ENCODE measurements at regions of chr9 and their contacts with region 1.

Region 1: DNA sequence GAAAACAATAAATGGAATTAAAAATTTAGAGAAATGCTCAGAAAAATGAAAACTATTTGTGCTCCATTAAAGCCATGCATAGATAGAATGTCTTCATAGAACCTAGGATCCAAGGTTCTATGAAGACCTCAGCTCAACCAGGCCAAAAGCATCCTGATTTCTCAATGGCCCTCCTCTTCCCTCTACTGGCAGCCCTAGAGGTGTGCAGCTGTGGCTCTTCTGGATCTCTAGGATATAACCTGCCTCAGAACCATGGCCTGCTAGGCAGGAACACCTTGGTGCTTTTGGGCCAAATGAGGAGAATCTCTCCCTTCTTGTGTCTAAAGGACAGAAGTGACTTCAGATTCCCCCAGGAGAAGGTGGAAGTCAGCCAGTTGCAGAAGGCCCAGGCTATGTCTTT is 15.1 kb downstream of the IFNA1 start:
- DNase-seq: peak; percentile 63 to 75 (median 67)
- H3K4me3 ChIP-seq: no peak overlapping the region
- H3K27ac ChIP-seq: no peak overlapping the region
- H3K4me1 ChIP-seq: no peaks in the 10 kb centered on the region
- H3K27me3 ChIP-seq: no peaks in the 10 kb centered on the region

Region 2: DNA sequence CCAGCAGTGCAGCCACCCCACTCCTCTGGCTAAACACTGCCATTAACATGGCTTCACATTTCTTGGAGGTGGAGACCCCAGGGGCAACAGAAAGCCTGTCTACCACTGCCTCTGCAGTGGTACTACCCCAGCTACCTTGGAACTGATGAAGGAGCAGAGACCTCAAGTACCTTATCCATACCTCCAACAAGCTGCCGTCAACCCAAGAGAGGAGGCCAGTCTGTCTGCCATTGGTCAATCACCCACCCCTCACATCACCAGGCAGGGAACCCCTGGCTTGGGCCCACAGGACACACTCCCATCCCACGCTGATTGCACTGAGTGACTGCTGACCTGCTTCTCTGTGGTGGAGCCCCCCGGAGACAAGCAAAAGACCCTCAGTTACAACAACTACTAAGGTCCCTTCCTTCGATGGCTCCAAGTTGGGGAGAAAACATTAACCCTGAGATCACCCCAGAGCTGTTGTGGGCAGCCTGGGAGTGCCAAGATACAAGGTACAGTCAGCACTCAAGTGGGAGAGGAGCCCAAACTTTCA is 221.1 kb before region 1 on chr9:
- CTCF ChIA-PET with region 1: interaction called, 14 read pairs
- POLR2A ChIA-PET with region 1: no interaction called
- DNase-seq: no peak
- H3K4me3 ChIP-seq: no peak overlapping the region
- H3K27ac ChIP-seq: no peak overlapping the region
- H3K4me1 ChIP-seq: peaks cover 0 to 3% (median 0%) of the 10 kb centered on the region in 4 experiments
- H3K27me3 ChIP-seq: no peaks in the 10 kb centered on the region

Region 3: GRCh38 chr9:21317956-21318923 is 137.1 kb before region 1 on chr9:
- CTCF ChIA-PET with region 1: interaction called, 20 read pairs
- POLR2A ChIA-PET with region 1: no interaction called
- DNase-seq: peak; percentile 31 to 66 (median 63)
- H3K4me3 ChIP-seq: no peak overlapping the region
- H3K27ac ChIP-seq: no peak overlapping the region
- H3K4me1 ChIP-seq: peaks cover 0 to 9% (median 3%) of the 10 kb centered on the region in 4 experiments
- H3K27me3 ChIP-seq: peaks cover 0 to 3% (median 0%) of the 10 kb centered on the region in 5 experiments

Region 4: GRCh38 chr9:21334701-21335632 is 120.4 kb before region 1 on chr9 and contains the start of gene KLHL9:
- CTCF ChIA-PET with region 1: interaction called, 14 read pairs
- POLR2A ChIA-PET with region 1: no interaction called
- DNase-seq: peak; percentile 92 to 95 (median 93)
- H3K4me3 ChIP-seq: peak within 1 kb of the TSS; percentile 72 to 95 (median 89)
- H3K27ac ChIP-seq: peak within 1 kb of the TSS; percentile 97 to 99
- H3K4me1 ChIP-seq: peaks cover 9 to 48% (median 21%) of the 10 kb centered on the region in 4 experiments
- H3K27me3 ChIP-seq: no peaks in the 10 kb centered on the region

Region 5: DNA sequence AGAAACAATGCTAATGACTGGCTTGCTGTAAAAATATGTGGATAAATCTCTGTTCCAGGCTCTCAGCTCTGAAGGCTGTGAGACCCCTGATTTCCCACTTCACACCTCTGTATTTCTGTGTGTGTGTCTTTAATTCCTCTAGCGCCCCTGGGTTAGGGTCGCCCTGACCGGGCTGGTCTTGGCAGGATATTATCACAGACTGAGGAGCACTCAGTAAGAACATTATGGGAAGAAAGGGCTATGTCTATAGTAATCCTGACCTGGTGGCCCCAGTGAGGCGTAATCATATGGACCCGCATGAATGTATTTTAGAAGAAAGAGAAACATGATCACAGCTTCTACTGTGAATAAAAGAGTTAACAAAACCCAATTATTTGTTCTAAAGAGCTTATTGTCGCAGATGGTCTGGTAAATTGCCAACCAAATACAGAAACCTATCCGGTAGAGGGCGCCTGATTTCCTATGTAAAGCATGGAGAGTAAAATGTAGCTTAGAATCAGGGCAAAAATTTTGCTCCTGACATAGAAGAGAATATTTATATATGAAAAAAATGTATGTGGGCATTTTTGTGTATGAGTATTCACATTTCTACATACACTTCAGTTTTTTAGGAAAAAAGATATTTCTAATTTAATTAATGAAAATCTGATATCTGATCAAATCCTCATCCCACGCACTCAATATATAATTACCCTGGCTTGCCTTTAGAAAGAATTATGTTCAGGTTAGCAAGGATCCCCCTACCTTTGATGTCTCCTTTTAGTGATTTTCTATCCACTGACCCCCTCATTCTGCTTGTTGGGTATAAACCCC is 20.9 kb before region 1 on chr9:
- CTCF ChIA-PET with region 1: interaction called, 65 read pairs
- POLR2A ChIA-PET with region 1: no interaction called
- DNase-seq: peak; percentile 73 to 87 (median 84)
- H3K4me3 ChIP-seq: no peak overlapping the region
- H3K27ac ChIP-seq: no peak overlapping the region
- H3K4me1 ChIP-seq: peaks cover 0 to 7% (median 4%) of the 10 kb centered on the region in 4 experiments
- H3K27me3 ChIP-seq: no peaks in the 10 kb centered on the region

Measured in common myeloid progenitor, CD34-positive (primary cell).